Gastrocnemius medialis (tissue), 4 donors: ENCODE measurements at regions of chr16 and their contacts with region 1.

Region 1: GRCh38 chr16:49513040-49513439 is 139.4 kb downstream of the C16orf78 start:
- DNase-seq: peak in 1 of 2 donors; percentile 47
- ATAC-seq: no peak
- H3K4me3 ChIP-seq: no peak overlapping the region
- H3K27ac ChIP-seq: no peak overlapping the region
- H3K4me1 ChIP-seq: peaks cover 24 to 26% of the 10 kb centered on the region in 2 donors
- H3K27me3 ChIP-seq: no peaks in the 10 kb centered on the region
- CTCF ChIP-seq: peak in 1 of 5 experiments; percentile 31
- POLR2A ChIP-seq: no peak

Region 2: DNA sequence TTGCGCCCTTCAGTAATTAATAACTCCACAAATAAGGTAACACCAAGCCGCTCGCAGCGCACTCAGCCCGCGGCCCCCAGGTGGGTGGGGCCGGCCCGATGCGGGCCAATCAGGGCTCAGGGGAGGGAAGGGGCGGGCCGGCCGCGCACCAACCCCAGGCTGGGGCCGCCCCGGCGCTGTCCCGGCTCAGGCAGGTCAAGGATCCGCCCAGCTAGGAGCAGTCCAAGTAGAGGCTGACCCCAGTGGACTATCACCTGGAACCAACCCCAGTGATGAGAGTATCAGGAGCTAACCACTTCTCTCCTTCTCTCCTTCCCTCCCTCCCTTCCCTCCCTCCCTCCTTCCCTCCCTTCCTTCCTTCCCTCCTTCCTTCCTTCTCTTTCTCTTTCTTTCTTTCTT is 28.6 kb before region 1 on chr16:
- in situ Hi-C with region 1: no loop called
- intact Hi-C with region 1: loop called (anchors 2 kb)
- DNase-seq: peak; percentile 62 to 82
- ATAC-seq: peak; percentile 90 to 94
- H3K4me3 ChIP-seq: peak overlapping the region; percentile 36 to 49 (median 48)
- H3K27ac ChIP-seq: peak overlapping the region; percentile 67 to 85 (median 80)
- H3K4me1 ChIP-seq: peaks cover 11 to 14% of the 10 kb centered on the region in 2 donors
- H3K27me3 ChIP-seq: no peaks in the 10 kb centered on the region
- CTCF ChIP-seq: no peak
- POLR2A ChIP-seq: peak in 1 of 2 donors; percentile 31